ENCODE measurements at regions of chr4 and their contacts with region 1.

Region 1: DNA sequence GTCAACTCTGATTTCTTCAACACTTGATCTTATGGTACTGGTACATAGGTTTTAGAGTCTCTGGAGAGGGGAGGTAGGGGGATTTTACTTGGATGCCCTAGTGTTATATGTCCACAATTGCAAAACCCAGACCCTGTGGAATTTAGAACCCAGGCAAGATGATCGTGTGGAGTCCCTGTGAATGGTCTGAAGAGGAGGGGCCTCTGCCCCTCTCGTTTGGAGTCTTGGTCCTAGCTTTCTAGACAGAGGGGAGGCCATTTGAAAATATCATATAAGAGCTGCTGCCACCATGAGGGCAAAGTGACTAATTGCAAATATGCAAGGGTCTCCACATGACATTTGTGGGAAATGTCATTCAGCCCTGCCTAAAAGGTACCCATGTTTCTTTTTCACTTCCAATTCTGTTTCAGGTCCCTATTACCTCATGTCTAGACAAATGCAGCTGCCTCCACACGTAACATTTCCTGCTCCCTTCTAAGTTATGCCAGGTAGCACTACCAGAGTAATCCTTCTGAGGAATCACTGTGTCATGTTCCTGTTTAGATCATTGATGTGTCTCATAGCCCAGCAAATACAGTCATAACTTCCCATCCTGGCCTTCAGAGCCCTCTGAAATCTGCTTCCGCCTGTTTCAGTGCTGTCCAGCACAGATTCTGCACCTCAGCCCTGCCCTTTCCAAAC is 126.8 kb downstream of the KLHL8 start:
- DNase-seq: peak; percentile 28 to 68 (median 54)
- ATAC-seq: peak; percentile 83
- H3K4me3 ChIP-seq: no peak overlapping the region
- H3K27ac ChIP-seq: no peak overlapping the region
- H3K4me1 ChIP-seq: peaks cover 5 to 23% of the 10 kb centered on the region in 2 experiments; a peak in 3 of 5 replicates
- H3K27me3 ChIP-seq: no peaks in the 10 kb centered on the region
- CTCF ChIP-seq: peak; percentile 55 to 79 (median 71)
- EP300 ChIP-seq: no peak
- POLR2A ChIP-seq: no peak
- RAD21 ChIP-seq: peak; percentile 56 to 75

Region 2: GRCh38 chr4:86921608-86922252 is 171.9 kb before region 1 on chr4:
- CTCF ChIA-PET with region 1: interaction called, 9 read pairs
- POLR2A ChIA-PET with region 1: interaction called, 5 read pairs
- in situ Hi-C with region 1: loop called (anchors 5 kb)
- intact Hi-C with region 1: loop called (anchors 1 kb)
- DNase-seq: no peak
- ATAC-seq: no peak
- H3K4me3 ChIP-seq: no peak overlapping the region
- H3K27ac ChIP-seq: no peak overlapping the region
- H3K4me1 ChIP-seq: peaks cover 10 to 17% of the 10 kb centered on the region in 2 experiments; a peak in 4 of 5 replicates
- H3K27me3 ChIP-seq: no peaks in the 10 kb centered on the region
- CTCF ChIP-seq: no peak
- EP300 ChIP-seq: no peak
- POLR2A ChIP-seq: no peak
- RAD21 ChIP-seq: no peak

Region 3: DNA sequence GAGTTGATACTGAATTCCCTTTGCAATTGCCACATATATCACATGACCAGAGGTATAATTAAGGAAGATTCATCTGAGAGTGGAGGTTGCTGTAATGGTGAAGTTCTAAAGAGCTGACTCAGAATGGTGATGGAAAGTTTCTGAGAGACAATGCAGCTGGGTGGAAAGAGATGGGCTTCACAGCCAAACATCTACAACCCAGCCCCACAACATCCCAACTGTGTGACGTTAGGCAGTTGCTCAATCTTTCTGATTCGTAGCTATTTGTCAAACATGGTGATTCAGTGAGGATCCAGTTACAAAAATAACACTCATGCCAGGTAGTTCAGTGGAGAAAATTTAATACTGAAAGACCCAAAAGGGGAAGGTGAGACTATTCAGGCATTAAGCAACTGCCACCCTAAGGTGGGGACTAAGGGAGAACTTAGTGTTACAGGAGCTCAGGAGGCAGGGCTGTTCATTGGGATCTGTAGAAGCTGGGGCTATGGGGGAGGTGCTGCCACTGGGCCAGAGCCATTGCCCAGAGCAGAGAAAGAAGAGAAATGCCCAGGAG is 165.7 kb before region 1 on chr4:
- CTCF ChIA-PET with region 1: interaction called, 9 read pairs
- POLR2A ChIA-PET with region 1: interaction called, 5 read pairs
- in situ Hi-C with region 1: loop called (anchors 5 kb)
- intact Hi-C with region 1: no loop called
- DNase-seq: no peak
- ATAC-seq: peak; percentile 43
- H3K4me3 ChIP-seq: no peak overlapping the region
- H3K27ac ChIP-seq: no peak overlapping the region; the same call in 2 of the 3 replicates
- H3K4me1 ChIP-seq: peaks cover 3 to 22% of the 10 kb centered on the region in 2 experiments; a peak in 4 of 5 replicates
- H3K27me3 ChIP-seq: no peaks in the 10 kb centered on the region
- CTCF ChIP-seq: no peak
- EP300 ChIP-seq: no peak
- POLR2A ChIP-seq: no peak
- RAD21 ChIP-seq: no peak

Region 4: DNA sequence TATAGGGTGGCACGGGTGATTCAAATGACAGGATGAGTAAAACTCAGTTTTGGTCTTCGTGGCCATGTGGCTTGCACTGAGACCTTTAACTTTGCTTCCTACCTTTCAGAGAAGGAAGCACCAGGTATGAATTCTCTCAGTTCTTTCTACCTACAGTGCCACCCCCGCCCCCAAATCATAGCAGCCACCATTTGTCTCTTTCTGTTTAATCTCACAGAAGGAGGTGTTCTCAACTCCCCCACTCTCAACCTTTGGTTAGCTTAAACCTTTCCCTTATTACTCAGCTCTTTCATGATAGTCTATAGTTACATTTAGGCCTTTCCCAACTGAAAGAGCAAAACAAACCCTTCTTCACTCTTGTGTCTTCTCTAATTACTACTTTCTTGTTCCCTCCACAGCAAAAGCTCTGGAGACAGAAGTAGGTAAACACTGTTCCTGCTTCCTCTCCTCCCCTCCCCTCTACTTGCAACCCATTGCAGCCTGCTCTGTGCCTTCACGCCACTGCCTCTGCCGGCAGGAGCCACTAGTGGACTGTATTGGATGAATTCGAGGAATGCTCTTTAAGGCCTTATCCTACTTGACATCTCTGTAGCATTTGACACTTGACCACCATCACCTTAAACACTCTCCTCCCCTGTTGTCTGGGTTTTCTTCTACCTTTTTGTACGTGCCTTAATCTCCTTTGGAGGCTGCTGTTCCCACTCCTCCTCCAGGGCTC is 35.1 kb before region 1 on chr4:
- CTCF ChIA-PET with region 1: no interaction called
- POLR2A ChIA-PET with region 1: interaction called, 3 read pairs
- in situ Hi-C with region 1: no loop called
- intact Hi-C with region 1: loop called (anchors 2 kb)
- DNase-seq: peak; percentile 39 to 77 (median 58)
- ATAC-seq: peak; percentile 92
- H3K4me3 ChIP-seq: no peak overlapping the region
- H3K27ac ChIP-seq: peak overlapping the region; percentile 41; the same call in 2 of the 3 replicates
- H3K4me1 ChIP-seq: peaks cover 11 to 46% of the 10 kb centered on the region in 2 experiments; a peak in 4 of 5 replicates
- H3K27me3 ChIP-seq: no peaks in the 10 kb centered on the region
- CTCF ChIP-seq: peak; percentile 64 to 73 (median 68)
- EP300 ChIP-seq: peak; percentile 22; the same call in 1 of the 2 replicates
- POLR2A ChIP-seq: no peak
- RAD21 ChIP-seq: peak; percentile 53 to 74

Region 5: GRCh38 chr4:87461281-87461700 is 367.7 kb after region 1 on chr4:
- CTCF ChIA-PET with region 1: no interaction called
- POLR2A ChIA-PET with region 1: no interaction called
- in situ Hi-C with region 1: no loop called
- intact Hi-C with region 1: no loop called
- DNase-seq: no peak
- ATAC-seq: no peak
- H3K4me3 ChIP-seq: no peak overlapping the region
- H3K27ac ChIP-seq: no peak overlapping the region
- H3K4me1 ChIP-seq: no peaks in the 10 kb centered on the region
- H3K27me3 ChIP-seq: no peaks in the 10 kb centered on the region
- CTCF ChIP-seq: no peak
- EP300 ChIP-seq: no peak
- POLR2A ChIP-seq: no peak
- RAD21 ChIP-seq: no peak